PC-9 (cell line): ENCODE measurements at regions of chr9 and their contacts with region 1.

Region 1: GRCh38 chr9:34072868-34073590 is 24.3 kb upstream of the UBAP2 start:
- DNase-seq: peak; percentile 14 to 50
- H3K4me3 ChIP-seq: no peak overlapping the region
- H3K27ac ChIP-seq: no peak overlapping the region
- H3K4me1 ChIP-seq: peaks cover 8% of the 10 kb centered on the region
- H3K27me3 ChIP-seq: no peaks in the 10 kb centered on the region
- CTCF ChIP-seq: no peak

Region 2: DNA sequence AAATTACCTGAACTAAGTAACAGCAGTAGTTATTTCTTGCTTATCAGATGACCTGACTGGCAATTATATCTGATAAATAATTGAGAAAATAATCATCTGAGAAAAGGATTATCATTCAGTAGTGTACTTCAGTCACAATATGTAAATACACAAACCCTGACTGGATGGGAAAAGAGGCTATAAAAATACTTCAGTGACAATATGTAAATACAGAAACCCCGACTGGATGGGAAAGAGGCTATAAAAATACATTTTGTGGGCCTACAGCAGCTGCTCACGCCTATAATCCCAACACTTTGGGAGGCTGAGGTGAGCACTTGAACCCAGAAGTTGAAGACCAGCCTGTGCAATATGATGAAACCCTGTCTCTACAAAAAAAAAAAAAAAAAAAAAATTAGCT is 35.4 kb before region 1 on chr9:
- CTCF ChIA-PET with region 1: interaction called, 10 read pairs
- POLR2A ChIA-PET with region 1: no interaction called
- intact Hi-C with region 1: no loop called
- DNase-seq: no peak
- H3K4me3 ChIP-seq: no peak overlapping the region
- H3K27ac ChIP-seq: no peak overlapping the region
- H3K4me1 ChIP-seq: no peaks in the 10 kb centered on the region
- H3K27me3 ChIP-seq: no peaks in the 10 kb centered on the region
- CTCF ChIP-seq: no peak

Region 3: DNA sequence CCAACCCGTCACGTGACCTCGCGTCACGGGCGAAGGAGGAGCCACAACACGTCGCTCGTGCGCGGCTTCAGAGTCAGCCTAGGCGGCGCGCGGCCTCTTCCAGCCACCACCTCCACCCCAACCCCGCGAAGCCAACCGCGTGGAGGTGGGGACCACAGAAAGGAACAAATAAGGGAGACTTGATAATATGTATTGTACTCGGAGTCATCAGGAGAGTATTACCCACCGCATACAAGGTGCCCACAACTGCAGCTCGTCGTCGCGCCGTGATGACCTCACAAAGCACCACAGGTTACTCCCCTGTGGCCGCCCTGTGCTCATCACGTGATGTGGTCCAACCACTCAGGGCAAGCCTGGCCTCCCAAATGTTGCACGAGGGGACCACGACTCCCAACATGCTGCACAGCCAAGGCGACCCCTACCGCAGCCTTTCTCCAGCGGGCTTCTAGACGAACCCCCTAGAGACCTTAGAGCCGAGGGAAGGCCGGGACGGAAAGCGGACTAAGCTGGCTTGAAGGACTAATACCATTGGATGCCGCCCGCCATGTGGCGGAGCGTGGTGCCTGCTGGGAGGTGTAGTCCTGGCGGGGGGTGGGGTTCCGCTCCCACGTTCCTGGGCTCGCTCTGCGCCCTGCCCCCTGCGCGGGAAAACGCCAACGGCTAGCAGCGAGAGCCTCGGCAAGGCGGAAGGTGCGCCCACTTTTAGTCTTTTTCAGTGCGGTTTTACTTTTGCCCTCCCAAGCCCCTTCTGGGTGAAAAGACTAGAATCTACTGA is 23.9 kb before region 1 on chr9:
- CTCF ChIA-PET with region 1: interaction called, 3 read pairs
- POLR2A ChIA-PET with region 1: interaction called, 15 read pairs
- intact Hi-C with region 1: loop called (anchors 1 kb)
- DNase-seq: peak; percentile 81 to 89
- H3K4me3 ChIP-seq: peak overlapping the region; percentile 69
- H3K27ac ChIP-seq: peak overlapping the region; percentile 90
- H3K4me1 ChIP-seq: peaks cover 20% of the 10 kb centered on the region
- H3K27me3 ChIP-seq: no peaks in the 10 kb centered on the region
- CTCF ChIP-seq: no peak

Region 4: GRCh38 chr9:34376596-34377403 is 303.8 kb after region 1 on chr9 and contains the start of gene MYORG:
- CTCF ChIA-PET with region 1: no interaction called
- POLR2A ChIA-PET with region 1: no interaction called
- intact Hi-C with region 1: loop called (anchors 5 kb)
- DNase-seq: peak; percentile 87 to 96
- H3K4me3 ChIP-seq: peak within 1 kb of the TSS; percentile 62
- H3K27ac ChIP-seq: no peak within 1 kb of the TSS
- H3K4me1 ChIP-seq: peaks cover 7% of the 10 kb centered on the region; the same call in 1 of the 2 replicates
- H3K27me3 ChIP-seq: no peaks in the 10 kb centered on the region
- CTCF ChIP-seq: no peak
- total RNA-seq, gene MYORG: 3.0 and 3.1 TPM in 2 replicates